Mammary epithelial cell (primary cell): ENCODE measurements at regions of chr15 and their contacts with region 1.

Region 1: GRCh38 chr15:41806291-41807181 is 21.4 kb upstream of the JMJD7 start:
- DNase-seq: peak; percentile 88
- H3K4me3 ChIP-seq: no peak overlapping the region
- H3K27ac ChIP-seq: peak overlapping the region; percentile 98
- H3K4me1 ChIP-seq: peaks cover 71% of the 10 kb centered on the region
- H3K27me3 ChIP-seq: no peaks in the 10 kb centered on the region
- CTCF ChIP-seq: peak; percentile 32 to 71

Region 2: DNA sequence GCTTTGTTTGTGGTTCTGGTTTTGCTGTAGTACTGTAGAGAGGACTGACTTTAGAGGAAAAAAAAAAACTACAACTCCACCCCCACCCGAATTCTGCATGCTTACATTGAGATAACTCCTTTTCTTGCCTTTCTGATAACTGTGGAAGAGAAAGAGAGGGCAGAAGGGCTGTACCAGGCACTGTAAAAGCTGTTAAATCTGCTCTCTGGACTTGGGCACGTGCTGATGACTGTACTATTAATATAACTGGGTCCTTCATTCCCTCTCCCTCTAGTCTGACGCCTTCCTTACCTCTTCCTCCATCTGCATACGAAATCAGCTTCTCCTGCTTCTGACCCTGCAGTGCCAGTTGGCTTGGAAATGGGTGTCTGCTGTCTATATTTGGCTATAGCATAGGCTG is 17.3 kb before region 1 on chr15:
- CTCF ChIA-PET with region 1: no interaction called
- dilution Hi-C with region 1: no loop called
- in situ Hi-C with region 1: no loop called
- intact Hi-C with region 1: loop called (anchors 1 kb)
- DNase-seq: no peak
- H3K4me3 ChIP-seq: no peak overlapping the region
- H3K27ac ChIP-seq: peak overlapping the region; percentile 96
- H3K4me1 ChIP-seq: peaks cover 61% of the 10 kb centered on the region
- H3K27me3 ChIP-seq: no peaks in the 10 kb centered on the region
- CTCF ChIP-seq: no peak